Activated CD4-positive, alpha-beta T cell treated with anti-CD3 and anti-CD28 coated beads, Interleukin-2, amount 10 ng/mL, durations not matched to agents 24 days and 14 days (primary cell): ENCODE measurements at regions of chr12 and their contacts with region 1.

Region 1: DNA sequence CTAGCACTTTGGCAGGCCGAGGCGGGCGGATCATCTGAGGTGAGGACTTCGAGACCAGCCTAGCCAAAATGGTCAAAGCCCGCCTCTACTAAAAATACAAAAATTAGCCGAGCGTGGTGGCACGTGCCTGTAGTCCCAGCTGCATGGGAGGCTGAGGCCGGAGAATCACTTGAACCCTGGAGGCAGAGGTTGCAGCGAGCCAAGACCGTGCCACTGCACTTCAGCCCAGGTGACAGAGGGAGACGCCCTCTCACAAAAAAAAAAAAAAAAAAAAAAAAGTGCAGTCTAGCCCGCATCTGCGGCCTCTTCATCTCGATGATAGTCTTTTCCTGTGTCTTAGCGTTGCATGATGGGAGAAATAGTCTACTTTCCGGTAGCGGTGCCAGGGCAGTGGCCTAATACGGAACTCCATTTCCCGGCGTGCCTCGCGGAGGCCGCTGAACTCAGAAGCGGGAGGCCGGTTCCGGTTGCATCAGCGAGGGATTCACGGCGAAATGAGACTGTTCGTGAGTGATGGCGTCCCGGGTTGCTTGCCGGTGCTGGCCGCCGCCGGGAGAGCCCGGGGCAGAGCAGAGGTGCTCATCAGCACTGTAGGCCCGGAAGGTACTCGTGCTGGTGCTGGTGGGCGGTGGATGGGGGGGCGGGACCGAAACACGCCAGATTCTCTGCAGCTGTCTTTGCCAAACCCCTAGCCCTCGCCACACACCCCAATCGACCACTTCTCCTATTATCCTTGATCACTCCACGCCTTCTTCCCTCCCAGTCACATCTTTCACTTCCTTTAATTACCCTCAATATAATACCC is at the start of gene MARS1:
- DNase-seq: peak; percentile 98
- H3K4me3 Mint-ChIP-seq: peak within 1 kb of the TSS; percentile 96
- H3K27ac Mint-ChIP-seq: peak within 1 kb of the TSS; percentile 93
- H3K4me1 Mint-ChIP-seq: peaks cover 27% of the 10 kb centered on the region
- H3K27me3 Mint-ChIP-seq: peaks cover 2% of the 10 kb centered on the region
- total RNA-seq, gene MARS1: 307 and 316 TPM in 2 replicates

Region 2: DNA sequence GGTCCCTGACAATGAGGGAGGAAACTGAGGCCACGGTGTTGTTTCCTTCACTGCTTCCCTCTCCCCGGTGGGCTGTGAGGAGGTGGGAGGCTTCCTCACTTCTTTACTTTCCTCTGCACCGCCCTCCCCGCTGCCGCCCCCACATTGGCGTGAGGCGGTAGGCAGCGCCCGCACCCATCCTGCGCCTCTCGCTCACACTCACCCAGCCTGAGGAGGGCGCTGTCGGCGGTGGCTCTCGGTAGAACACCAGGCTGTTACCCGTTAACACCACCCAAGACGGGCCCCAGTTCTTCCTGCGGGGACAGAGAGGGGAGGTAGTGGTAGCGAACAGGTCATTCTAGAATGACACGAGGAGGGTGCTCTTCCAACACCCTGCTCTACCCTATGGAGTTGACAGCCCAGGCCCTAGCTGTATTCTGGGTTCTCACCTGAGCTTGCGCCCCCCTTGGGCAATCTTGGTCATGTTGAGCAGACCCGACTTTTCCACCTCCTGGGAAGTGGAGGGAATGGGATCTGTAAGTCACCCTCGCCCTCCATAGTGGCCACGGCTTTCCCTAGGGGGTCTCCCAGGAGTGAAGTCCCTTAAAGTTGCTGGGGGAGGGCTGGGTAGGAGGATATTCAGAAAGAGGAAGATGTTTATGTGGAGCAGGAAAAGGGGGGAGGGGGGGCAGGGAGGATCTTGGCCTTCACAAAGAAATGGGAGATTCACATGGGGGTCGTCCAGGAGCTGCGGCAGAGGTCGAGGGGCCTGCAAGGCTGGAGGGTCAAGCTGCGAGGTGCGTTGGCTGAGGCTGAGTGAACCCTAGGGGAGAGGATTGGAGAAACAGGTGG is 11.4 kb before region 1 on chr12:
- intact Hi-C with region 1: loop called (anchors 1 kb)
- DNase-seq: peak; percentile 93
- H3K4me3 Mint-ChIP-seq: peak overlapping the region; percentile 96
- H3K27ac Mint-ChIP-seq: peak overlapping the region; percentile 97
- H3K4me1 Mint-ChIP-seq: peaks cover 68% of the 10 kb centered on the region
- H3K27me3 Mint-ChIP-seq: no peaks in the 10 kb centered on the region

Region 3: DNA sequence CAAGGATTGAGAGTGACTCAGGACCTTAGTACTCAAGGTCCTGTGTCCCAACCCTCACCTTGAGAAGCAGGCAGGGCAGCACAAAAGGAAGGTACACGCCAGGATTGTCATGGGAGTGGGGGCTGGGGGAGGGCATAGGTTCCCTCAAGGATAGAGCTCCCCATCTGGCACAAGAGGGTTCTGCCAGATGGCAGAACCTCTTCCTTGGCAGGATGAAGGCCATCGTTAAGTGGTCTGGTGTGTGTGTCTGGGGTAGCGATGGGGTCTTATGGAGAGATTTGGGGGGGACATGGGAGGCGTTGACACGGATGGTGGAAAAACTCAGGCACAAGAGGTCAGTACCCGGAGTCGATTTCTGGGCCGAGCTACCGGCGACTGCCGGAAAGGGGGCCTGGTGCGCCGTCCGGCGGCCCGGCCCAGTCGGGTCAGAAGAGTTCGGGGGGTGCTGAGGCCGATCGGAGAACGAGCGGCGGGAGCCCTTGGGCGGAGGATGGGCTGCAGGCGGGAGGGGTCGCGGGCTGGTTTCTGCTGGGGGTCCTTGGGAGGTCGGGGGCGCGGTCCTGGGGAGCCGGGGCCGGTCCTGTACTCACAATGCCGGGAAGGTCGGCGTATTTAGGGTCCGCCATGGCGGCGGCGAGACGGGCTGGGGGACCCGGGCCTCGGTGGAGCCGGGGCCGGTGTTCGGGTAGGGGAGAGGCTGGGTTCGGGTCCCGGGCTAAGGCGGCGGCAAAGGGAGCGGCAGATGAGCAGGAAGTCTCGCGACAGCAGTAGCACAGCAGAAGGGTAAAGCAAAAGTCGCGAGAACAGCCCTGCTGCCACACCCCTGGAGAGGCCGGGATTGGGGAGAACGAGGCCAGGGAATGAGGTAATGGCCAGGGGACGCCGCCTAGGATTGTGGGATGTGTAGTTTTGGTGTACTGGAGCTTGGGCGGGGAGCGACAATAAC is 58.9 kb after region 1 on chr12 and contains the start of gene DCTN2:
- intact Hi-C with region 1: loop called (anchors 1 kb)
- DNase-seq: peak; percentile 98
- H3K4me3 Mint-ChIP-seq: peak within 1 kb of the TSS; percentile 96
- H3K27ac Mint-ChIP-seq: peak within 1 kb of the TSS; percentile 94
- H3K4me1 Mint-ChIP-seq: peaks cover 42% of the 10 kb centered on the region
- H3K27me3 Mint-ChIP-seq: peaks cover 21% of the 10 kb centered on the region
- total RNA-seq, gene DCTN2: 78.9 and 80.9 TPM in 2 replicates

Region 4: GRCh38 chr12:57865090-57865751 is 377.4 kb after region 1 on chr12:
- intact Hi-C with region 1: no loop called
- DNase-seq: peak; percentile 85
- H3K4me3 Mint-ChIP-seq: peak overlapping the region; percentile 77
- H3K27ac Mint-ChIP-seq: peak overlapping the region; percentile 71
- H3K4me1 Mint-ChIP-seq: peaks cover 9% of the 10 kb centered on the region
- H3K27me3 Mint-ChIP-seq: peaks cover 15% of the 10 kb centered on the region